Naive thymus-derived CD4-positive, alpha-beta T cell (primary cell): ENCODE measurements at regions of chr4 and their contacts with region 1.

Region 1: GRCh38 chr4:122577808-122578781 is 42.8 kb downstream of the IL21 start:
- DNase-seq: peak; percentile 12 to 95 (median 91)
- ATAC-seq: peak; percentile 90
- H3K4me3 ChIP-seq: peak overlapping the region; percentile 12
- H3K4me3 Mint-ChIP-seq: peak overlapping the region; percentile 47 to 79 (median 72)
- H3K27ac ChIP-seq: peak overlapping the region; percentile 76
- H3K27ac Mint-ChIP-seq: peak overlapping the region; percentile 82 to 98 (median 91)
- H3K4me1 ChIP-seq: peaks cover 7 to 14% of the 10 kb centered on the region in 2 donors
- H3K4me1 Mint-ChIP-seq: peaks cover 16 to 54% (median 50%) of the 10 kb centered on the region in 7 donors
- H3K27me3 ChIP-seq: no peaks in the 10 kb centered on the region
- H3K27me3 Mint-ChIP-seq: peaks cover 0 to 6% (median 0%) of the 10 kb centered on the region in 5 donors

Region 2: GRCh38 chr4:121823505-121824170 is 754.5 kb before region 1 on chr4 and contains the start of gene CCNA2:
- CTCF ChIA-PET with region 1: no interaction called
- POLR2A ChIA-PET with region 1: no interaction called
- intact Hi-C with region 1: loop called (anchors 2 to 5 kb)
- DNase-seq: peak; percentile 86 to 95 (median 93)
- ATAC-seq: peak; percentile 99
- H3K4me3 ChIP-seq: peak within 1 kb of the TSS; percentile 85
- H3K4me3 Mint-ChIP-seq: peak within 1 kb of the TSS; percentile 85 to 100 (median 92)
- H3K27ac ChIP-seq: peak within 1 kb of the TSS; percentile 60
- H3K27ac Mint-ChIP-seq: peak within 1 kb of the TSS; percentile 72 to 97 (median 93)
- H3K4me1 ChIP-seq: peaks cover 0 to 9% of the 10 kb centered on the region in 2 donors
- H3K4me1 Mint-ChIP-seq: peaks cover 4 to 44% (median 12%) of the 10 kb centered on the region in 7 donors
- H3K27me3 ChIP-seq: no peaks in the 10 kb centered on the region
- H3K27me3 Mint-ChIP-seq: peaks cover 0 to 3% (median 0%) of the 10 kb centered on the region in 5 donors
- total RNA-seq, gene CCNA2: 0.24 to 63.7 (median 1.2) TPM

Region 3: GRCh38 chr4:121998002-121998401 is 580.1 kb before region 1 on chr4:
- CTCF ChIA-PET with region 1: no interaction called
- POLR2A ChIA-PET with region 1: no interaction called
- intact Hi-C with region 1: loop called in 1 of 2 experiments (anchors 5 kb)
- DNase-seq: no peak
- ATAC-seq: peak; percentile 18
- H3K4me3 ChIP-seq: no peak overlapping the region
- H3K4me3 Mint-ChIP-seq: no peak overlapping the region
- H3K27ac ChIP-seq: no peak overlapping the region
- H3K27ac Mint-ChIP-seq: no peak overlapping the region
- H3K4me1 ChIP-seq: no peaks in the 10 kb centered on the region
- H3K4me1 Mint-ChIP-seq: peaks cover 0 to 1% (median 0%) of the 10 kb centered on the region in 7 donors
- H3K27me3 ChIP-seq: peaks cover 0 to 4% of the 10 kb centered on the region in 2 donors
- H3K27me3 Mint-ChIP-seq: peaks cover 21 to 59% (median 32%) of the 10 kb centered on the region in 5 donors

Region 4: GRCh38 chr4:122309988-122310626 is 268.0 kb before region 1 on chr4:
- CTCF ChIA-PET with region 1: interaction called, 7 read pairs
- POLR2A ChIA-PET with region 1: no interaction called
- intact Hi-C with region 1: loop called (anchors 1 kb)
- DNase-seq: peak in 3 of 9 donors; percentile 2 to 8 (median 7)
- ATAC-seq: no peak
- H3K4me3 ChIP-seq: no peak overlapping the region
- H3K4me3 Mint-ChIP-seq: no peak overlapping the region
- H3K27ac ChIP-seq: no peak overlapping the region
- H3K27ac Mint-ChIP-seq: no peak overlapping the region
- H3K4me1 ChIP-seq: no peaks in the 10 kb centered on the region
- H3K4me1 Mint-ChIP-seq: peaks cover 0 to 4% (median 0%) of the 10 kb centered on the region in 7 donors
- H3K27me3 ChIP-seq: no peaks in the 10 kb centered on the region
- H3K27me3 Mint-ChIP-seq: no peaks in the 10 kb centered on the region

Region 5: DNA sequence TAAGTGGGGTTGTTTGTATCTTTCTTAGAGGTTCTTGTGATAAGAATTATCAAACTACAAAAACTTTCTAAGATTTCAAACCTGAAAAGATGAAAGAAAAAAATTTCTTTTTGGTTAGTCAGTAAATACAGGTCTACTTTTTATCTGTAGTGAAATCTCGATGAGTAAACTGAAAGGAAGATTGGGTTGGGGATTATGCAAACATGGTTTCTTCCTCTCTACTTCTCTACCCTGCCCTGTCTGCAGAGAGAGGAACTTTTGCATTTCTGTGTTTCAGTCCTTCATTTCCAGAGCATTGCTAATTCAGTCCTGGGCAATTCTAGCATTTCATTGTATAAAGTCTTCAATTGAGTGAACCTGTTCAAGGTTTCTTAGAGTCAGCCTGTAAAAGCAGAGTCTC is 70.0 kb before region 1 on chr4:
- CTCF ChIA-PET with region 1: no interaction called
- POLR2A ChIA-PET with region 1: no interaction called
- intact Hi-C with region 1: loop called in 1 of 2 experiments (anchors 2 kb)
- DNase-seq: peak in 1 of 9 donors; percentile 4
- ATAC-seq: peak; percentile 49
- H3K4me3 ChIP-seq: no peak overlapping the region
- H3K4me3 Mint-ChIP-seq: peak overlapping the region in 6 of 10 donors; percentile 20 to 68 (median 24)
- H3K27ac ChIP-seq: no peak overlapping the region
- H3K27ac Mint-ChIP-seq: peak overlapping the region in 1 of 9 donors; percentile 81
- H3K4me1 ChIP-seq: no peaks in the 10 kb centered on the region
- H3K4me1 Mint-ChIP-seq: peaks cover 0 to 38% (median 10%) of the 10 kb centered on the region in 7 donors
- H3K27me3 ChIP-seq: no peaks in the 10 kb centered on the region
- H3K27me3 Mint-ChIP-seq: peaks cover 0 to 12% (median 0%) of the 10 kb centered on the region in 5 donors

Region 6: GRCh38 chr4:122732329-122733026 is 154.4 kb after region 1 on chr4 and contains the start of gene BBS12:
- CTCF ChIA-PET with region 1: no interaction called
- POLR2A ChIA-PET with region 1: interaction called, 4 read pairs
- intact Hi-C with region 1: loop called (anchors 1 kb)
- DNase-seq: peak; percentile 90 to 99 (median 99)
- ATAC-seq: peak; percentile 99
- H3K4me3 ChIP-seq: peak within 1 kb of the TSS; percentile 97
- H3K4me3 Mint-ChIP-seq: peak within 1 kb of the TSS; percentile 80 to 100 (median 97)
- H3K27ac ChIP-seq: peak within 1 kb of the TSS; percentile 74
- H3K27ac Mint-ChIP-seq: peak within 1 kb of the TSS; percentile 92 to 99 (median 98)
- H3K4me1 ChIP-seq: peaks cover 9 to 17% of the 10 kb centered on the region in 2 donors
- H3K4me1 Mint-ChIP-seq: peaks cover 6 to 44% (median 36%) of the 10 kb centered on the region in 7 donors
- H3K27me3 ChIP-seq: no peaks in the 10 kb centered on the region
- H3K27me3 Mint-ChIP-seq: no peaks in the 10 kb centered on the region
- total RNA-seq, gene BBS12: 0.71 to 4.3 (median 2.3) TPM